Naive thymus-derived CD4-positive, alpha-beta T cell (primary cell): ENCODE measurements at regions of chr7 and their contacts with region 1.

Region 1: GRCh38 chr7:131327626-131328376 is at the start of gene MKLN1:
- DNase-seq: peak; percentile 82 to 91 (median 86)
- ATAC-seq: peak; percentile 99
- H3K4me3 ChIP-seq: peak within 1 kb of the TSS; percentile 88
- H3K4me3 Mint-ChIP-seq: peak within 1 kb of the TSS; percentile 88 to 100 (median 94)
- H3K27ac ChIP-seq: peak within 1 kb of the TSS; percentile 94
- H3K27ac Mint-ChIP-seq: peak within 1 kb of the TSS; percentile 86 to 99 (median 97)
- H3K4me1 ChIP-seq: peaks cover 26 to 43% of the 10 kb centered on the region in 2 donors
- H3K4me1 Mint-ChIP-seq: peaks cover 35 to 85% (median 71%) of the 10 kb centered on the region in 7 donors
- H3K27me3 ChIP-seq: no peaks in the 10 kb centered on the region
- H3K27me3 Mint-ChIP-seq: no peaks in the 10 kb centered on the region
- total RNA-seq, gene MKLN1: 42.0 to 69.8 (median 59.3) TPM

Region 2: GRCh38 chr7:131424219-131424822 is 96.5 kb after region 1 on chr7:
- CTCF ChIA-PET with region 1: no interaction called
- POLR2A ChIA-PET with region 1: no interaction called
- intact Hi-C with region 1: loop called (anchors 5 kb)
- DNase-seq: peak in 7 of 9 donors; percentile 18 to 50 (median 44)
- ATAC-seq: peak; percentile 90
- H3K4me3 ChIP-seq: no peak overlapping the region
- H3K4me3 Mint-ChIP-seq: no peak overlapping the region
- H3K27ac ChIP-seq: no peak overlapping the region
- H3K27ac Mint-ChIP-seq: peak overlapping the region in 2 of 9 donors; percentile 11
- H3K4me1 ChIP-seq: no peaks in the 10 kb centered on the region
- H3K4me1 Mint-ChIP-seq: peaks cover 0 to 20% (median 13%) of the 10 kb centered on the region in 7 donors
- H3K27me3 ChIP-seq: no peaks in the 10 kb centered on the region
- H3K27me3 Mint-ChIP-seq: no peaks in the 10 kb centered on the region